Right cardiac atrium (tissue), 5 donors: ENCODE measurements at regions of chrX and their contacts with region 1.

Region 1: DNA sequence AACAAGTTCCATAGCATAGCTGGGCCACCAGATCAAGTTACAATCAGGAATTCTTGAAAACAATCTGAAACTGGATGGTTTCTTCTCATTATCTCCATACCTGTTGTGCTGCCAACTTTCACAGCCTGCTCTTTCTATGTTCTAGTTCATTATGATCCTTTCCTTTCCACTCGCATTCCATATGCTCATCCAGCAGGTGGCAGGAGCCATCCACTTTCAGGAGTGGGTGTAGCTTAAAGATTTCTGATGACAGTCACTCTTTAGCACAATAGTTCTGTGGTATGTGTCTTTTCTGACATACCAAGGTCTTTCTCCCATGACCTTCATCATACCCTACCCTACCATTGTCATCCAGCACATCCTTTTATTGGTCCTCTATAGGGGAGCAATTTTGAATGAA is 46.4 kb downstream of the PAGE2 start:
- DNase-seq: peak; percentile 23 to 62 (median 39)
- ATAC-seq: peak; percentile 71 to 82
- H3K4me3 ChIP-seq: no peak overlapping the region
- H3K27ac ChIP-seq: no peak overlapping the region
- H3K4me1 ChIP-seq: no peaks in the 10 kb centered on the region
- H3K27me3 ChIP-seq: no peaks in the 10 kb centered on the region

Region 2: DNA sequence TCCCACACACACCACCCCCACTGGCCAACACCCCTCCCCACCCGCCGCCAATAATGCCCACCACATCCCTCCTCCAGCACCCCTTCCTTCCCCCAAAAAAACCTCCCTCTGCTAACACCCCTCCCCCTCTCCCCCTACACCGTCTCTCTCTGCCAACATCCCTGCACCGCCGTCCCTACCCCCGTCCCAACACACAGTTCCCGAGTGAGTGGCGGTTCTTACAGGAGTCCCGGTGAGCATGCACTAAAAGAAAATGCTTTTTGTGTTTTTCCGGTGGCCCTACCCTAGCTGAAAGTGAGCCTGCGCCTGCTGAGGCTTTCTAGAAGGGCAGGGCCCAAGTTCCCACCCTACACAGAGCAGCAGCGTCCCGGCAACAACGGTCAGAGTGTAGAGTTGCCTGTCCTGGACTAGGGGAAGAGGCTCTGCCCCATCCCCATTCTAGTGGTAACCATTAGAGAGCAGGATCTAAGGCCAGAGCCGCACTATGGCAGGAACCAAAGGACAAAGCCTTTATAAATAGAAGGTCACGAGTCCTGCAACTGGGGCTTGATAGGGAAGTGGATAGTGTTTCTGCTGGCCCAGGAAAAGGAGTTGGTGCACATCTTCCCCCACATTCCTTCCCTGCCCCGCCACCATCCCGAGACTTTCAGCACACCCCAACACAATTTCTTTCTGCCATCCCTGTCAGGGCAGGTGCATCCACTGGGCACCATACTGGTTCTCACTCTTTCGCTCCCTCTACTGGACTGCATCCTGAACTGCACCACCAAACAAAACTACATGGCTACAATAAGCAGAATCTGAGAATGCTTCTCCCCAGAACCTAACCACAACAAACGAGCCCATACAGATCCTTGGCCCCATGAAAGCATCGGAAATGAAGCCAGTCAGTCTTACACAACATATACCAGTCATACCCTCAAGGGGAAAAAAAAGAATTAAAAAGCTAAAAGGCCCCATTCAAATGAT is 207.6 kb after region 1 on chrX:
- intact Hi-C with region 1: loop called in 1 of 4 experiments (anchors 10 kb)
- DNase-seq: peak in 2 of 3 donors; percentile 15 to 32
- ATAC-seq: peak in 1 of 2 donors; percentile 74
- H3K4me3 ChIP-seq: no peak overlapping the region
- H3K27ac ChIP-seq: peak overlapping the region; percentile 15
- H3K4me1 ChIP-seq: no peaks in the 10 kb centered on the region
- H3K27me3 ChIP-seq: no peaks in the 10 kb centered on the region